Heart left ventricle (tissue), 16 donors: ENCODE measurements at regions of chr11 and their contacts with region 1.

Region 1: GRCh38 chr11:109946322-109946846 is 146.8 kb upstream of the ZC3H12C start:
- DNase-seq: peak; percentile 81 to 90 (median 84)
- ATAC-seq: peak; percentile 90 to 99 (median 99)
- H3K4me3 ChIP-seq: peak overlapping the region in 10 of 12 donors; percentile 10 to 51 (median 34)
- H3K27ac ChIP-seq: peak overlapping the region in 11 of 12 donors; percentile 43 to 77 (median 60)
- H3K4me1 ChIP-seq: peaks cover 0 to 8% (median 4%) of the 10 kb centered on the region in 12 donors
- H3K27me3 ChIP-seq: no peaks in the 10 kb centered on the region
- CTCF ChIP-seq: peak; percentile 83 to 98 (median 90)
- POLR2A ChIP-seq: peak in 1 of 2 donors; percentile 49

Region 2: DNA sequence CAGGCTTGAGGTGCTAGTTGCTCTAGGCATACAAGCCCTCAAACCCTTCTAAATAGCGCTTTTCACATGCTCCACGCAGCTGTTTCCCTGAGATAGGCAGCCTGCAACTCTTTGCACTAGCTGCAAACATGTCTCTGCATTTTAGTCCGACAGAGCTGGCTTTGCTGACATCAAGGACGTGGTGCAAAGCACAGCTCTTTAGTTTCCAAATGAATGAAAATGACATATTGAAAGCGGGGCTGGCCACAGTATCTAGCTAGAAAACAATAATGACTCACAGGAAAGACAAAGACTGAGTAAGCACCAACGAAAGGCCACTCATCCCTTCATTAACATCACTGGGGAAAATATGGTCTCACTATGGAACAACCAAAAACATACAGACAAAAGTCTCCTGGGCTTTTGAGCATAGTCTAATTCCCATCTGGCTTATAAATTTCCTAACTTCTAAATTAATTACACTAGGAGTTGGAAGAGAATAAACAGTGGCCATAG is 131.5 kb after region 1 on chr11:
- intact Hi-C with region 1: no loop called
- DNase-seq: no peak
- ATAC-seq: no peak
- H3K4me3 ChIP-seq: no peak overlapping the region
- H3K27ac ChIP-seq: no peak overlapping the region
- H3K4me1 ChIP-seq: peaks cover 0 to 22% (median 0%) of the 10 kb centered on the region in 12 donors
- H3K27me3 ChIP-seq: no peaks in the 10 kb centered on the region
- CTCF ChIP-seq: no peak
- POLR2A ChIP-seq: no peak

Region 3: DNA sequence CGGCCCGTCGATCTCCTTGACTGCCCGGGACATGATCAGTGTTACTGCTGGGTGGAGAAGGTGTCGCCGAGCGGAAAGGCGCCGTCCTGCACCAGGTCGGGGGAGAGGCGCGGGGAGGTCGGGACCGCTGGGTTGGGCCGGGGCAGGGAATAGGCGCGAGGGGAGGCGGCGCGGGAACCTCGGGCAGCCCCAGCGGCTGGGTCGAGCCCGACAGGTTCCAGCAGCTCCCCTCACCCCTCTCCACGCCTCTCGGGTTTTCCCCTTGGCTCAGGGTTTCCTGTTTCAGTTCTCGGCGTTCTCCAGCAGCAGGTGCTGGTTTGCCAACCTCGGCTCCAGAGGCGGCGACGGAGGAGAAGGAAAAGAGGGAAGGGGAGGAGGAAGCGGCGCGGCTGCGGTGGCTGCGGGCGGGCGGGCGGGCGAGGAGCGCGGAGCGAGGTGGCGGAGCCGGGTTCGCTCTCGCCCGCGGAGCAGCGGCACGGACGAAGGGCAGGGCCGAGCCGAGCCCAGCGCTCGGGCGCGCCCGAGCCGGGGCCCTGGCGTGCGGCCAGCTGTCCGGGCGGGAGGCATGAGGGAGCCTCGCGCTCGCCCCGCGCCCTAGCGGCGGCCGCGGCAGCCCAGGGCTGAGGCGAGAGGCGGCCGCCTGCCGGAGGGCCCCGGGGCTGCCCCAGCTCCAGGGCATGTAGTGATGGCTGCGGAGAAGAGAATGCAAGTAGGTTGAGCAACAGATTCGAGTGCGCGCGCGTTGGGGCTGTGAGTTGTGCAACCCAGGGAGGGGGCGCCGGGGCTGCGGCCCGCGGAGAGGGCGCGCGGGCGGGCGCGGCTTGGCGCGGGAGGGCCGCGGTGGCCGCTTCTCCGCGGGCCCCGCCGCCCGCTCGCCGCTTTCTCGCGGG is 146.4 kb after region 1 on chr11 and contains the start of gene ZC3H12C:
- intact Hi-C with region 1: loop called in 7 of 10 experiments (anchors 1 to 5 kb)
- DNase-seq: peak; percentile 80 to 88 (median 86)
- ATAC-seq: peak; percentile 72 to 87 (median 85)
- H3K4me3 ChIP-seq: peak within 1 kb of the TSS; percentile 59 to 93 (median 81)
- H3K27ac ChIP-seq: peak within 1 kb of the TSS; percentile 76 to 99 (median 94)
- H3K4me1 ChIP-seq: peaks cover 0 to 38% (median 20%) of the 10 kb centered on the region in 12 donors
- H3K27me3 ChIP-seq: no peaks in the 10 kb centered on the region
- CTCF ChIP-seq: peak in 10 of 12 donors; percentile 17 to 71 (median 48)
- POLR2A ChIP-seq: peak in 1 of 2 donors; percentile 19
- total RNA-seq, gene ZC3H12C: 13.8 to 24.3 (median 18.8) TPM

Region 4: GRCh38 chr11:110195845-110196754 is 249.7 kb after region 1 on chr11:
- intact Hi-C with region 1: loop called in 2 of 10 experiments (anchors 5 to 10 kb)
- DNase-seq: no peak
- ATAC-seq: no peak
- H3K4me3 ChIP-seq: no peak overlapping the region
- H3K27ac ChIP-seq: no peak overlapping the region
- H3K4me1 ChIP-seq: peaks cover 0 to 10% (median 0%) of the 10 kb centered on the region in 12 donors
- H3K27me3 ChIP-seq: no peaks in the 10 kb centered on the region
- CTCF ChIP-seq: no peak
- POLR2A ChIP-seq: no peak

Region 5: DNA sequence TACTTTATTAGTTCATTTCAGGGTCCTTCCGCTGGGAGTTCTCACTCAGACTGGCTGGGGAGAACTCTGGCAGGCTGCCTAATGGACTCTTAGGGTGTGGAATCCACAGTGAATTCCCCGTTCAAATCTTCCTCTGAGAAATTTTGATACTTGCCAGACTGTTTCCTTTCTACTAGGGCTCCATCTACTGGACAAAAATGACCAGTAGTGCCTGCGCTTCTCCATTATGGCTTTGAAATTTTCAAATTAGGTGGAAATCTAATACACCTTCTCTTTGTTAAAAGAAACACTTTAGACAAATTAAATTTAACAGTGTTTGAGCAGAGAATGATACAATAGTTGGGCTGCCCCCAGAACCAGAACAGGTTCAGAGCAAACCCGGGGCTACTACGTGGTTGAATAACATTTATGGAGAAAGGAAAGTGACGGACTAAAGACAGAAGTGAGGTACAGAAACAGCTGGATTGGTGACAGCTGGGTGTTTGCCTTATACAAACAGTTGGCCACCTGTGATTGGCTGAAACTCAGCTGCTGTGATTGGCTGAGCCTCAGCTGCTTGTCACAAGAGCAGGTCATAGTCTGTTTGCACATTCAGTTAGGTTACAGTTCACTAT is 430.4 kb after region 1 on chr11:
- intact Hi-C with region 1: loop called in 8 of 10 experiments (anchors 5 to 10 kb)
- DNase-seq: peak in 4 of 5 donors; percentile 78 to 86 (median 81)
- ATAC-seq: peak; percentile 56 to 89 (median 84)
- H3K4me3 ChIP-seq: peak overlapping the region in 3 of 12 donors; percentile 18 to 34 (median 19)
- H3K27ac ChIP-seq: peak overlapping the region in 6 of 12 donors; percentile 19 to 61 (median 27)
- H3K4me1 ChIP-seq: peaks cover 0 to 44% (median 7%) of the 10 kb centered on the region in 12 donors
- H3K27me3 ChIP-seq: no peaks in the 10 kb centered on the region
- CTCF ChIP-seq: peak; percentile 66 to 90 (median 83)
- POLR2A ChIP-seq: no peak